Activated naive CD4-positive, alpha-beta T cell treated with anti-CD3 and anti-CD28 coated beads for 36 hours (primary cell): ENCODE measurements at regions of chr1 and their contacts with region 1.

Region 1: GRCh38 chr1:231240883-231241735 is at the start of gene GNPAT:
- DNase-seq: peak; percentile 90
- H3K4me3 Mint-ChIP-seq: peak within 1 kb of the TSS; percentile 97
- H3K27ac Mint-ChIP-seq: peak within 1 kb of the TSS; percentile 82
- H3K4me1 Mint-ChIP-seq: peaks cover 58% of the 10 kb centered on the region
- H3K27me3 Mint-ChIP-seq: no peaks in the 10 kb centered on the region
- total RNA-seq, gene GNPAT: 60.4 to 62.0 TPM

Region 2: GRCh38 chr1:231272880-231273279 is 31.8 kb after region 1 on chr1:
- CTCF ChIA-PET with region 1: no interaction called
- intact Hi-C with region 1: loop called (anchors 1 kb)
- DNase-seq: peak; percentile 18
- H3K4me3 Mint-ChIP-seq: no peak overlapping the region
- H3K27ac Mint-ChIP-seq: peak overlapping the region; percentile 98
- H3K4me1 Mint-ChIP-seq: peaks cover 22% of the 10 kb centered on the region
- H3K27me3 Mint-ChIP-seq: no peaks in the 10 kb centered on the region

Region 3: GRCh38 chr1:231301990-231302389 is 60.9 kb after region 1 on chr1:
- CTCF ChIA-PET with region 1: no interaction called
- intact Hi-C with region 1: no loop called
- DNase-seq: no peak
- H3K4me3 Mint-ChIP-seq: no peak overlapping the region
- H3K27ac Mint-ChIP-seq: no peak overlapping the region
- H3K4me1 Mint-ChIP-seq: no peaks in the 10 kb centered on the region
- H3K27me3 Mint-ChIP-seq: no peaks in the 10 kb centered on the region

Region 4: GRCh38 chr1:231702801-231703395 is 461.8 kb after region 1 on chr1:
- CTCF ChIA-PET with region 1: no interaction called
- intact Hi-C with region 1: no loop called
- DNase-seq: no peak
- H3K4me3 Mint-ChIP-seq: no peak overlapping the region
- H3K27ac Mint-ChIP-seq: no peak overlapping the region
- H3K4me1 Mint-ChIP-seq: peaks cover 12% of the 10 kb centered on the region
- H3K27me3 Mint-ChIP-seq: no peaks in the 10 kb centered on the region